ENCODE measurements at regions of chr9 and their contacts with region 1.

Region 1: GRCh38 chr9:129177791-129178559 is at the start of gene IER5L:
- DNase-seq: peak; percentile 96
- ATAC-seq: peak; percentile 69
- H3K4me3 Mint-ChIP-seq: peak within 1 kb of the TSS; percentile 84
- H3K27ac Mint-ChIP-seq: peak within 1 kb of the TSS; percentile 73; the same call in 1 of the 2 replicates
- H3K4me1 Mint-ChIP-seq: peaks cover 19% of the 10 kb centered on the region
- H3K27me3 Mint-ChIP-seq: peaks cover 82% of the 10 kb centered on the region
- CTCF ChIP-seq: no peak
- total RNA-seq, gene IER5L: 4.6 to 5.9 TPM (median 5.1 TPM) in 3 replicates

Region 2: GRCh38 chr9:129093421-129094204 is 84.4 kb before region 1 on chr9:
- CTCF ChIA-PET with region 1: no interaction called
- POLR2A ChIA-PET with region 1: no interaction called
- DNase-seq: no peak
- ATAC-seq: no peak
- H3K4me3 Mint-ChIP-seq: no peak overlapping the region
- H3K27ac Mint-ChIP-seq: peak overlapping the region; percentile 74; the same call in 1 of the 2 replicates
- H3K4me1 Mint-ChIP-seq: no peaks in the 10 kb centered on the region
- H3K27me3 Mint-ChIP-seq: no peaks in the 10 kb centered on the region
- CTCF ChIP-seq: no peak

Region 3: GRCh38 chr9:129139993-129140396 is 38.0 kb before region 1 on chr9:
- CTCF ChIA-PET with region 1: interaction called, 345 read pairs
- POLR2A ChIA-PET with region 1: interaction called, 16 read pairs
- DNase-seq: peak; percentile 70
- ATAC-seq: peak; percentile 58
- H3K4me3 Mint-ChIP-seq: peak overlapping the region; percentile 66
- H3K27ac Mint-ChIP-seq: peak overlapping the region; percentile 97
- H3K4me1 Mint-ChIP-seq: peaks cover 62% of the 10 kb centered on the region
- H3K27me3 Mint-ChIP-seq: no peaks in the 10 kb centered on the region
- CTCF ChIP-seq: no peak

Region 4: DNA sequence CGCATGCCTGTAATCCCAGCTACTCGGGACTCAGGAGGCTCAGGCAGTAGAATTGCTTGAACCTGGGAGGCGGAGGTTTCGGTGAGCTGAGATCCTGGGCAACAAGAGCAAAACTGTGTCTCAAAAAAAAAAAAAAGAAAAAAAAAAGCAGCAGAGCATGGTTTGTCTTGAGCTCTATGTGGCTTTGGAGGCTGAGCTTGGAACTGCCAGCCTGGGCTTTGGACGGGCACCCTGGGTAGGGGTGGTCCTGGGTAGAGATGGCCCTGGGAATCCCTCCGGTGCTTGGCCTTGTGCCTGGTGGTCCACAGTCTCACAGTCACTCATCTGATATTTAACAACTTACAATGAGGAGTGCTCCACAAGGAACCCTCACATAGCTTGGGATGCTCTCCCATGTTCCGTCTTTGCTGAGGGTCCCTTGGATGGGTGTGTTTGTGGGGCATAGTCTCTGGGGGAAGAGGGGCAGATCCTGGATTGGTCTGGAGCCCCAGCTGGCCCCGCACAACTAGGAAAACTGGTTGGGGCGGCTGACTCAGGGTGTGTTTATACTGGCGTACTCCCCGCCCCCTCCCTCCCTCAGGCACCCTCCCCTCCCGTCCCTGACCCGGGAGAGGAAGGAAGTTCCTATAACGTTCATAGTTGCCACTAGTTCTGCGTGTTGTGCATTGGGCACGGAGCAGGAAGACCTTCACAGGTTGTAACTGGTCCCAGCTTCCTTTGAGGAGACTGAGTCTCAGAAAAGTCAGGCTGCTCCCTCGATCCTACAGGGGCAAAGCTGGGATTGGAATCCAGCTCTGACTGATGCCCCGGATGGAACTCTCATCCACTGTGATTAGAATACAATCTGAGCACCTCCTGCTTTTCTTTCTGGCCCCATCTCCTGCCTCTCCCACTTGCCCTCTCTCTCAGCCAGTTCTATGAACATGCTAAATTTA is 11.1 kb before region 1 on chr9:
- CTCF ChIA-PET with region 1: interaction called, 26 read pairs
- POLR2A ChIA-PET with region 1: interaction called, 16 read pairs
- DNase-seq: peak; percentile 67
- ATAC-seq: peak; percentile 77
- H3K4me3 Mint-ChIP-seq: peak overlapping the region; percentile 60
- H3K27ac Mint-ChIP-seq: peak overlapping the region; percentile 78
- H3K4me1 Mint-ChIP-seq: peaks cover 36% of the 10 kb centered on the region
- H3K27me3 Mint-ChIP-seq: peaks cover 12% of the 10 kb centered on the region
- CTCF ChIP-seq: no peak

Region 5: DNA sequence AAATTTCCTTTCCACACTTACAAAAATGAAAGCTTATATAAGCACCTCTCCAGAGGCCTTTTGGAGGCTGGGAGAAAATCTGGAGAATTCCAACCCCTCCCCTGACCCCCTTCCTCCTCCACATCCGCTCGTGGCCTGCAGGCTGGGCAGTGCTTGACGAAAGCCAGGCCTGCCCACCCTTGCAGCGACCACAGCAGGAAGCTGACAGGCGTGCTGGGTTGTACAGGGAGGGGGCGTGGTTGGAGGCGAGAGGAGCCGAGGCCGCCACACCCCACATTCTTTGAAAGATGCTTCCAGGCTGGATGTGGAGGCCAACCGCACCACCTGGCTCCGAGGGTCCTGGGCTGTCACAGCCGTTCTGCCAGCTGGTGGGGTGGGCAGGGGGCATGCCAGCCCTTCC is 47.8 kb after region 1 on chr9:
- CTCF ChIA-PET with region 1: interaction called, 13 read pairs
- POLR2A ChIA-PET with region 1: interaction called, 5 read pairs
- DNase-seq: peak; percentile 72
- ATAC-seq: peak; percentile 68
- H3K4me3 Mint-ChIP-seq: 0 out of 2 replicates have a peak overlapping the region, but pooled peaks have one; percentile 41
- H3K27ac Mint-ChIP-seq: no peak overlapping the region
- H3K4me1 Mint-ChIP-seq: peaks cover 51% of the 10 kb centered on the region
- H3K27me3 Mint-ChIP-seq: no peaks in the 10 kb centered on the region
- CTCF ChIP-seq: no peak

Region 6: DNA sequence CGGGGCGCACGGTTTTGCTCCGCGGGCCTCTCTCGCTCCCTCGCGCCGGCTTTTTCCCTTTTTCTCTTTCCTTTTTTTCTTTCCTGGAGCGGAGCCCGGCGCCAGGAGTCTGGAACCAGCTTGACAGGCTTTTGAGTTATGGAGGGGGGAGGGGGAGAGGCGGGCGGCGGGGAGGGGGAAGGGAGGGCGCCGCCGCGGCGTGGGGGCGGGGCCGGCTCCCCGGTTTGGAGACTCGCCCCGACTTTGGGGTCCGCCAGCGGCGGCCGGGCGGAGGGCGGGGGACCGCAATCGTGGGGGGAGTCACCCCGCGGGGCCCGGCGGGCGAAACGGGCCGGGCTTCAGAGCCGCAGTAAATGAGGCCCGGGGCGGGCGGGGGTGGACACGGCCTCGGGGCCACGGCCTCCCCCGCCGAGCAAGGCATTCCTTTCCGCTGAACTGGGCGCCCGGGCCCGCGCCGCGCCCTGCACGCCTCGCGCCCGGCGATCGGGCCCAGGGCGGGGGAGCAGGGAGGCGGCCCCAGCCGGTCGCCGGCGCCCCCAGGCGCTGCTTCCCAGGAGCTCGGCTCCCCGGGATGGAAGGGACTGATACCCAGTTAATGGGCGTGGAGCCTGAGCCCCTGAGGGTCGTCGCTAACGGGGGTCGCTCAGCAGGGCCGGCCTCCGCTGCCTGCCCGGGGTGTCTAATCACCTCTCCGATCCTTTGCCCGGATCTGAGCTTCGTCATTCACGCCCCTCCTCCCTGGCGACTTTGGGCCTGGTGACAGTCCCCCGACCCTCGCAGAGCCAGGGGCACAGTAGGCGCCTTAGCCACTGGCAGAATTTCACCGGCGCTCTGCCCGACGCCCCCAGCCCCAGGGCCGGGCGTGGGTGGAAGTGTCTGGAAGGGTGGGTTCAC is 304.8 kb after region 1 on chr9:
- CTCF ChIA-PET with region 1: interaction called, 11 read pairs
- POLR2A ChIA-PET with region 1: no interaction called
- DNase-seq: no peak
- ATAC-seq: peak; percentile 3; the same call in 1 of the 2 replicates
- H3K4me3 Mint-ChIP-seq: peak overlapping the region; percentile 67
- H3K27ac Mint-ChIP-seq: no peak overlapping the region
- H3K4me1 Mint-ChIP-seq: peaks cover 37% of the 10 kb centered on the region
- H3K27me3 Mint-ChIP-seq: peaks cover 85% of the 10 kb centered on the region
- CTCF ChIP-seq: no peak

Region 7: DNA sequence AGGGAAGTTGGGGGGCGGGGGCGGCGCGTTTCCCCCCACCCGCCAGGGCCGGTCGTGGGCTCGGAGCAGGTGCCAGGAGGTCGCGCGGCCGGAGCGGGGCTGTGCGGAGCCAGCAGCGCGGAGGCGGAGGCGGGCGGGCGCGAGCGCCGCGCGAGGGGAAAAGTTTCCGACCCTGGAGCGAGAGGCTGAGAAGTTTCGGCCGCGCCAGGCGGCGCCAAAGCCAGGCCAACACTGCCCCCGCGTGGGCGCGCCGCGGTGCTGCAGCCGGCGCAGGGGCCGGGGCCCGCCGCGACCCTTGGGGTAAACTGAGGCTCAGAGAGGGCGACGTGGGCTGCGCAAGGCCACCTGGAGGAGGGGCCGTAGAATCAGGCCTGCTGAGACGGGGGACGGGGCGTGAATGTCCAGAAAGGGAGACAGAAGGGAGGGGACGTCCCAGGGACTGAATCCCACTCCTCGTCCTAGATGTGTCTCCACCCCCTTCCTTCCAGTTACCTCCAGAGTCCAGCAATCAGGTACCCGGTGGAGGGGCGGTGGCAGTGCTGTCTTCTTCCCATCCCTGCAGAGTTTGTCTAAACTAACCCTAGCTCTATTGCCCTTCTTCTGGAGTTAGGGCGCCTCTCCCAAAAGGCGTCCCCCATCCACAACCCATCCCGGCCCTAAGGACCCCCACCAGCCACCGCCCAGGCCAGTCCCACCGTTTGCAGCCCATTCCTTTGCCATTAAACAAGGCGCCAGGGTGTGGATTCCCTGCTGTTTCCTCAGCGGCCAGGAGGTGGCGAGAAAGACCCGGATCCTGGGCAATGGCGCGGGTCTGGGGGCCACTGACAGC is 432.7 kb after region 1 on chr9:
- CTCF ChIA-PET with region 1: interaction called, 11 read pairs
- POLR2A ChIA-PET with region 1: interaction called, 4 read pairs
- DNase-seq: peak; percentile 94
- ATAC-seq: peak; percentile 61
- H3K4me3 Mint-ChIP-seq: peak overlapping the region; percentile 72
- H3K27ac Mint-ChIP-seq: peak overlapping the region; percentile 74; the same call in 1 of the 2 replicates
- H3K4me1 Mint-ChIP-seq: peaks cover 24% of the 10 kb centered on the region
- H3K27me3 Mint-ChIP-seq: peaks cover 11% of the 10 kb centered on the region
- CTCF ChIP-seq: peak; percentile 92

Measured in WTC11 (cell line).